ENCODE measurements at regions of chr7 and their contacts with region 1.

Region 1: GRCh38 chr7:668139-668931 is 58.2 kb upstream of the DNAAF5 start:
- DNase-seq: peak in 1 of 2 donors; percentile 48
- ATAC-seq: peak in 7 of 8 donors; percentile 16 to 57 (median 37)
- H3K4me3 ChIP-seq: peak overlapping the region in 4 of 10 donors; percentile 5 to 15 (median 9)
- H3K27ac ChIP-seq: peak overlapping the region in 9 of 10 donors; percentile 45 to 84 (median 66)
- H3K4me1 ChIP-seq: peaks cover 20 to 51% (median 45%) of the 10 kb centered on the region in 9 donors
- H3K27me3 ChIP-seq: no peaks in the 10 kb centered on the region
- CTCF ChIP-seq: peak in 1 of 9 donors; percentile 6

Region 2: DNA sequence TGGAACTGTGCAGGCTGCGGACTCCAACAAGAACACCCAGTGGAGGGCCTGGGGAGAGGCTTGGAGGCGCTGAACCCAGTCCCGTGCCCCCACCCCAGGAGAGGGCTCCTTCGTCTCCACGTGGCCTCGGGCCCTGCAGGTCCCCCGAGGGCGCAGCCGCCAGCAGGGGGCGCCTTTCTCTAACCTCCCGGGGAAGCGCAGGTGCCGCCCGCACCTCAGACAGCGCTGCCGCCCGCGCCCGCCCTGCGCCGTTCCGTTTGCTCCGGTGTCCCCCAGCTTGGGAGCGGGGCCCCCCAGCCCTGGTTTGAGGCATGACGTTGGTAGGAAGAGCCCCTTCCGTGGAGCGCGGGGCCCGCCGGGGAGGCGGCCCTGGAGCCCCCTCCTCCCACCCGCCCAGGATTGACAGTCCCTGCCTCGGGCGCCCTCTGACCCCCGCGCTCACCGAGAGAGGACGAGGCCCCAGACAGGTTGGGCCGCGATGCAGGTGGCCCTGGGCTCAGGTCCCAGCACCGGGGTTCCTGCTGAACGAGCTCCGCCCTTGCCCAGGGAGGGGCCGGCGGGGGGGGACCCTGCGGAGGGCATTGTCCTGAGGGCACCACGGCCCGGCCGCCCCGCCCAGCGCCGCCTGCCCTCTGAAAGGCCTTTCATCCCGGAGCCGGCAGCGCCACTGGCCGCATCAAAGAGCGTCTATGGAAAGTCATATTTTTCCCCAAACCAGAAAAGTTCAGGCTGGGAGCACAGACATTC is 335.5 kb before region 1 on chr7:
- intact Hi-C with region 1: loop called in 1 of 10 experiments (anchors 10 kb)
- DNase-seq: peak; percentile 75 to 86
- ATAC-seq: peak; percentile 86 to 94 (median 90)
- H3K4me3 ChIP-seq: peak overlapping the region in 9 of 10 donors; percentile 37 to 56 (median 50)
- H3K27ac ChIP-seq: peak overlapping the region; percentile 24 to 85 (median 76)
- H3K4me1 ChIP-seq: peaks cover 4 to 17% (median 12%) of the 10 kb centered on the region in 9 donors
- H3K27me3 ChIP-seq: peaks cover 0 to 15% (median 4%) of the 10 kb centered on the region in 7 donors
- CTCF ChIP-seq: peak; percentile 78 to 95 (median 91)

Region 3: GRCh38 chr7:726084-726853 is 57.9 kb after region 1 on chr7 and contains the start of gene DNAAF5:
- intact Hi-C with region 1: loop called in 3 of 10 experiments (anchors 5 kb)
- DNase-seq: peak; percentile 87 to 88
- ATAC-seq: peak; percentile 87 to 94 (median 90)
- H3K4me3 ChIP-seq: peak within 1 kb of the TSS; percentile 50 to 96 (median 66)
- H3K27ac ChIP-seq: peak within 1 kb of the TSS in 9 of 10 donors; percentile 73 to 86 (median 78)
- H3K4me1 ChIP-seq: peaks cover 4 to 36% (median 24%) of the 10 kb centered on the region in 9 donors
- H3K27me3 ChIP-seq: no peaks in the 10 kb centered on the region
- CTCF ChIP-seq: peak in 1 of 9 donors; percentile 8
- total RNA-seq, gene DNAAF5: 18.0 to 30.0 (median 25.3) TPM